ENCODE measurements at regions of chr17 and their contacts with region 1.

Region 1: DNA sequence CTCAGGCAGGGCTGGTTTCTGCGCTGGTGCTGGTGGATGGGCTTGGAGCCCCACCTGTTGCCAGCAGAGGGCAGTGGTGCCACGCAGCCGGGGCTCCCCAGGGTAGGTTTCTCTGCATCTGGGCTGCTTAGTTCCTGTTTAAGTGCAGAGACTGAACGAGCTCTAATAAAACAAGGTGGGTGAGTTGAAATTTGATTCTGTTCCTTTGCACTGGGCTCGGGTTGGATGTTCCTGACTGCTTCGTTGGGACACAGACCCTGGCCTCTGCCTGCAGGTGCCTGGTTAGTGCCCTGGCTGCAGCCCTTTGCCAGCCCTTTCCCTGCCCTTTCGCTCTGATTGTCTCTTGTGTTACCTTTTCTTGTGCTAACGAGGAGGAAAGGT is 30.0 kb downstream of the TBCD start:
- DNase-seq: peak; percentile 90
- ATAC-seq: peak; percentile 100
- H3K4me3 ChIP-seq: no peak overlapping the region
- H3K4me3 Mint-ChIP-seq: no peak overlapping the region
- H3K27ac ChIP-seq: no peak overlapping the region
- H3K27ac Mint-ChIP-seq: no peak overlapping the region
- H3K4me1 ChIP-seq: peaks cover 3 to 13% of the 10 kb centered on the region in 2 donors
- H3K4me1 Mint-ChIP-seq: peaks cover 7% of the 10 kb centered on the region
- H3K27me3 ChIP-seq: no peaks in the 10 kb centered on the region
- H3K27me3 Mint-ChIP-seq: no peaks in the 10 kb centered on the region
- CTCF ChIP-seq: peak; percentile 99

Region 2: GRCh38 chr17:82863941-82864774 is 82.3 kb after region 1 on chr17:
- CTCF ChIA-PET with region 1: interaction called, 35 read pairs
- POLR2A ChIA-PET with region 1: interaction called, 5 read pairs
- intact Hi-C with region 1: no loop called
- DNase-seq: peak; percentile 85
- ATAC-seq: peak; percentile 83
- H3K4me3 ChIP-seq: peak overlapping the region in 2 of 5 experiments; percentile 9 to 18
- H3K4me3 Mint-ChIP-seq: peak overlapping the region; percentile 85
- H3K27ac ChIP-seq: peak overlapping the region; percentile 3 to 46
- H3K27ac Mint-ChIP-seq: peak overlapping the region; percentile 93
- H3K4me1 ChIP-seq: peaks cover 66 to 71% of the 10 kb centered on the region in 2 donors
- H3K4me1 Mint-ChIP-seq: peaks cover 78% of the 10 kb centered on the region
- H3K27me3 ChIP-seq: peaks cover 0 to 18% (median 0%) of the 10 kb centered on the region in 4 experiments
- H3K27me3 Mint-ChIP-seq: peaks cover 8% of the 10 kb centered on the region
- CTCF ChIP-seq: no peak

Region 3: DNA sequence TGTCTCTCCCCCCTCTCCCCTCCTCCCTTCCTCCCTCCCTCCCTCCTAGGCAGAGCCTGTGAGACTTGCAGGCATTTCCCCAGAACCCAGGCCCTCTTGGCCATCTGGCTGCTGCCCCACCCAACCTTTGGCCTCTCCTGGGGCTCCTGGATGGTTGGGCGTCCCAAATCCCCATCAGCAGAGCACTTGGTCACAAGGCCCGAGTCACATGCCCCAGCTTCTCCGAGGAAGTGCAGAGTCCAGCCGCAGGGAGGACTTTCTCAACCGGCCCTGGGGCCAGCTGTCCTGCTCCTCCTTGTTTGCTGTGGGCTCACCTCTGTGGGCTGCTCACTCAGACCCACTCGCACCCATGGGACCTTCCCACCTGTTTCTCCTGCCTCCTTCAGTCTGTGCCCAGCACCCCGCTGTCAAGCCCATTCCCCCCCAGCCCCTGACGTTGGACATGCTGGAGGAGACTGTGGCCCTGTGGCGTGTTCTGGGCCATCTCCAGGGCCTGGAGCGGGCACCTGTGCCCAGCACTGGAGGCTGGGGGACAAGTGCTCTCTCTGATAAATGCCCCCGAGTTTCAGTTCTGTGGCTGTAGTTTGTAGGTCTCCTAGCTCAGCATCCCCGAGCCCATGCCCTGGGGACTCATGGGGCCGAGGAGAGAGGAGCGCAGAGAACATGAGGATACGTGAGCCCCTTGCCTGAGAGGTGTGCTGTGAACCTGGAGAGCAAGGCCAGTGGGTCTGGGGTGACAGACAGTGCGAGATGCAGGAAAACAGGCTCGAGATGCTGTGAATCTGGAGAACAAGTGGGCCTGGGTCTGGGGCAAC is 100.2 kb after region 1 on chr17:
- CTCF ChIA-PET with region 1: interaction called, 27 read pairs
- POLR2A ChIA-PET with region 1: no interaction called
- intact Hi-C with region 1: no loop called
- DNase-seq: no peak
- ATAC-seq: no peak
- H3K4me3 ChIP-seq: no peak overlapping the region
- H3K4me3 Mint-ChIP-seq: peak overlapping the region; percentile 53
- H3K27ac ChIP-seq: no peak overlapping the region
- H3K27ac Mint-ChIP-seq: peak overlapping the region; percentile 68
- H3K4me1 ChIP-seq: peaks cover 46 to 51% of the 10 kb centered on the region in 2 donors
- H3K4me1 Mint-ChIP-seq: peaks cover 52% of the 10 kb centered on the region
- H3K27me3 ChIP-seq: peaks cover 0 to 4% (median 0%) of the 10 kb centered on the region in 4 experiments
- H3K27me3 Mint-ChIP-seq: no peaks in the 10 kb centered on the region
- CTCF ChIP-seq: no peak

Region 4: GRCh38 chr17:82931699-82932517 is 150.0 kb after region 1 on chr17:
- CTCF ChIA-PET with region 1: interaction called, 11 read pairs
- POLR2A ChIA-PET with region 1: no interaction called
- intact Hi-C with region 1: no loop called
- DNase-seq: no peak
- ATAC-seq: no peak
- H3K4me3 ChIP-seq: no peak overlapping the region
- H3K4me3 Mint-ChIP-seq: no peak overlapping the region
- H3K27ac ChIP-seq: no peak overlapping the region
- H3K27ac Mint-ChIP-seq: no peak overlapping the region
- H3K4me1 ChIP-seq: no peaks in the 10 kb centered on the region
- H3K4me1 Mint-ChIP-seq: no peaks in the 10 kb centered on the region
- H3K27me3 ChIP-seq: no peaks in the 10 kb centered on the region
- H3K27me3 Mint-ChIP-seq: no peaks in the 10 kb centered on the region
- CTCF ChIP-seq: no peak

Region 5: GRCh38 chr17:83079352-83079747 is 297.5 kb after region 1 on chr17 and contains the start of gene METRNL:
- CTCF ChIA-PET with region 1: no interaction called
- POLR2A ChIA-PET with region 1: no interaction called
- intact Hi-C with region 1: loop called (anchors 5 kb)
- DNase-seq: peak; percentile 76
- ATAC-seq: peak; percentile 53
- H3K4me3 ChIP-seq: peak within 1 kb of the TSS in 4 of 5 experiments; percentile 17 to 71 (median 54)
- H3K4me3 Mint-ChIP-seq: peak within 1 kb of the TSS; percentile 59
- H3K27ac ChIP-seq: no peak within 1 kb of the TSS
- H3K27ac Mint-ChIP-seq: peak within 1 kb of the TSS; percentile 32
- H3K4me1 ChIP-seq: peaks cover 21 to 24% of the 10 kb centered on the region in 2 donors
- H3K4me1 Mint-ChIP-seq: peaks cover 30% of the 10 kb centered on the region
- H3K27me3 ChIP-seq: peaks cover 0 to 13% (median 5%) of the 10 kb centered on the region in 4 experiments
- H3K27me3 Mint-ChIP-seq: peaks cover 13% of the 10 kb centered on the region
- CTCF ChIP-seq: no peak
- total RNA-seq, gene METRNL: 18.4 and 19.7 TPM in 2 replicates